Colonic mucosa (tissue), 4 donors: ENCODE measurements at regions of chr4 and their contacts with region 1.

Region 1: GRCh38 chr4:87375719-87376291 is 15.2 kb downstream of the HSD17B11 start:
- DNase-seq: peak; percentile 49
- H3K4me3 ChIP-seq: no peak overlapping the region
- H3K27ac ChIP-seq: peak overlapping the region; percentile 6
- H3K4me1 ChIP-seq: peaks cover 5% of the 10 kb centered on the region
- H3K27me3 ChIP-seq: no peaks in the 10 kb centered on the region
- CTCF ChIP-seq: peak; percentile 53

Region 2: DNA sequence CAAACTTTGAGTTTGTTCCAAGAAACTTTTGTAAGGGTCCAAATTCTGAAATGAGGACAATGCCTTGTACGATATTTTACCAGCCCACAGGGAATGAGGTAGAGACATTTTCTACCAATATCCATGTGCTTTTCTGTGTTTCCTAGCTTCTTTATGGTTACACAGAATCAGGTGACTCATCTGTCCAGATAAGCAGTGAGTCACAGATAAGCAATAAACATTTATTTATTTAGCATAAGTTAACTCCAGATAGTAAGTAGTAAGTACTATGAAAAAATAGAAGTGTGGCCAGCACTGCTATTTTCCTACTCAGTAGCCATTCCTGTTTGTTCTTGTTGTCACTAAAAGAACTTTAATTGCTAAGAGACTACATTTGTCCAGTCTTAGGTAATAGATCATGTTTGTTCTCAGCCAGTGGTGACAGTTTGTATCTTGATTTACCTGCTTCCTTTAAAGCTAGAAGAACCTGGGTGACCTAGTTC is 433.6 kb before region 1 on chr4:
- intact Hi-C with region 1: no loop called
- DNase-seq: no peak
- H3K4me3 ChIP-seq: no peak overlapping the region
- H3K27ac ChIP-seq: peak overlapping the region; percentile 12
- H3K4me1 ChIP-seq: peaks cover 10% of the 10 kb centered on the region
- H3K27me3 ChIP-seq: no peaks in the 10 kb centered on the region
- CTCF ChIP-seq: no peak

Region 3: DNA sequence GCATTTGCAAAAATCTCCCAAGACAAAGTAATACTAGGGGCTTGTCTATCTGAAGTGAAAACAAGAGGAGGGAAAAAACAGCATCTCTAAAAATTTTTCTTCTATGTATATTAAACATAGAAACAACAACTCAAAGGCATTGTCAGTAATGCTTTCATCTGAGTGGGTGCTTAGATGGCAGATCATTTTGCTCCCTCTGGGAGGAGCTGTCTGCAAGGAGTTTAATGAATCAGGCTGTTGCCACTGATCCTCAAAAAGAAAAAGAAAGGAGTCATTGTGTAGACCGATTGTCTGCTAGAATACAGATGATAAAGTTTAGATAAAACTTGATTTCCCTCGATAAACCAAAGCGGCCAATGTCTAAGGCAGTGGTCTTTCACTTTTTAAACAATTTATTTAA is 105.7 kb before region 1 on chr4:
- intact Hi-C with region 1: loop called (anchors 10 kb)
- DNase-seq: no peak
- H3K4me3 ChIP-seq: no peak overlapping the region
- H3K27ac ChIP-seq: no peak overlapping the region
- H3K4me1 ChIP-seq: no peaks in the 10 kb centered on the region
- H3K27me3 ChIP-seq: no peaks in the 10 kb centered on the region
- CTCF ChIP-seq: peak; percentile 30

Region 4: DNA sequence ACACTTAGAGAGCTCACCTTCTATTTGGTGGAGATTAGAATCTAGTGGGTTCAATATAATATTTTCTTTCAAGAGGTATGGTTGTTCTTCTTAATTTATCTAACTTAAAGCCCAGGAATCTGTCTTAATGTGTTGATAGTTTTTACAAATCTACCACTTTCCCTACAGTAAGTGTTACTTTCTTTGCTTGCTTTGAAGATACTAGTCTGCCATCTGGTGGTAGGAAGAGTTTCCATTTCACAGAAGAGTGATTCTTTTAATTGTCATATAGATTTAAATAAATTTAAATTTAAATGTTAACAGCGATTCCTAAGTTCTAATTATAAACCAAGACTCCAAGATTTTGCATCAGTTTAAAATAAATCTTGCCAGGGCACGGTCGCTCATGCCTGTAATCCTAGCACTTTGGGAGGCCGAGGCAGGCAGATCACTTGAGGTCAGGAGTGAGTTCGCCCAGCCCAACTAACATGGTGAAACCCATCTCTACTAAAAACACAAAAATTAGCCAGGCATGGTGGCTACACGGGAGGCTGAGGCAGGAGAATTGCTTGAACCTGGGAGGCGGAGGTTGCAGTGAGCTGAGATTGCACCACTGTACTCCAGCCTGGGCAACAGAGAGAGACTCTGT is 90.0 kb after region 1 on chr4:
- intact Hi-C with region 1: loop called (anchors 5 kb)
- DNase-seq: no peak
- H3K4me3 ChIP-seq: no peak overlapping the region
- H3K27ac ChIP-seq: no peak overlapping the region
- H3K4me1 ChIP-seq: peaks cover 5% of the 10 kb centered on the region
- H3K27me3 ChIP-seq: no peaks in the 10 kb centered on the region
- CTCF ChIP-seq: peak; percentile 59

Region 5: DNA sequence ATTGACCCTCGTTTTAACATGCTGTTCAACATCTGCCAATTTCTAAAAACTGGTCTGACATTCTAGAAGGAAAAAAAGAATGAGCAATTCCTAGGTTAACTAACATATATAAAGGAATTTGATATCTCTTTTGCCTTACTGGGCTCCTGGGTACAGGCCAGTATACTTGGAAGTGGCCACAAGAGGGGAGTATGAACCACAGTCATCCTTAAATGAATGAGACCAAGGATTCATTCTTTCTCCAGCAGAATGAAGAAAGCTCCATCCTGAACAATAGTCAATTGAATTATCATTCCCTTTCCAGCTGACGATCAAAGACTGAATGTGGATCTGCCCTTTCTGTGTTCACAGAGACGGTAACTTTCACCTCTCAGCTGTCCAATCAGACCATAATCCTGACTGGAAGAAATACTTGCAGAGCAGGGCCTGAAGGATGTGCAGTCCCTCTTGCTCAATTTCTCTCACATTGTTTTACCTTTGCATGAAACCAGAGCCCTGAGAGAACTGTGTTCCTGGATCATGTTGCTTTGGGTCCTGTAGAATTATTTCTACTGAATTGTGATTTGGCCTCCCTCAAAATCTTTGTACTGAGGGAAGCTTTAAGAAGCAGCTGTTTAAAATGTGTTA is 168.1 kb after region 1 on chr4:
- intact Hi-C with region 1: no loop called
- DNase-seq: no peak
- H3K4me3 ChIP-seq: no peak overlapping the region
- H3K27ac ChIP-seq: no peak overlapping the region
- H3K4me1 ChIP-seq: no peaks in the 10 kb centered on the region
- H3K27me3 ChIP-seq: no peaks in the 10 kb centered on the region
- CTCF ChIP-seq: no peak

Region 6: GRCh38 chr4:87848622-87849351 is 473.0 kb after region 1 on chr4:
- intact Hi-C with region 1: loop called (anchors 10 kb)
- DNase-seq: peak; percentile 43
- H3K4me3 ChIP-seq: no peak overlapping the region
- H3K27ac ChIP-seq: no peak overlapping the region
- H3K4me1 ChIP-seq: no peaks in the 10 kb centered on the region
- H3K27me3 ChIP-seq: no peaks in the 10 kb centered on the region
- CTCF ChIP-seq: peak; percentile 49